B cell (primary cell): ENCODE measurements at regions of chr12 and their contacts with region 1.

Region 1: DNA sequence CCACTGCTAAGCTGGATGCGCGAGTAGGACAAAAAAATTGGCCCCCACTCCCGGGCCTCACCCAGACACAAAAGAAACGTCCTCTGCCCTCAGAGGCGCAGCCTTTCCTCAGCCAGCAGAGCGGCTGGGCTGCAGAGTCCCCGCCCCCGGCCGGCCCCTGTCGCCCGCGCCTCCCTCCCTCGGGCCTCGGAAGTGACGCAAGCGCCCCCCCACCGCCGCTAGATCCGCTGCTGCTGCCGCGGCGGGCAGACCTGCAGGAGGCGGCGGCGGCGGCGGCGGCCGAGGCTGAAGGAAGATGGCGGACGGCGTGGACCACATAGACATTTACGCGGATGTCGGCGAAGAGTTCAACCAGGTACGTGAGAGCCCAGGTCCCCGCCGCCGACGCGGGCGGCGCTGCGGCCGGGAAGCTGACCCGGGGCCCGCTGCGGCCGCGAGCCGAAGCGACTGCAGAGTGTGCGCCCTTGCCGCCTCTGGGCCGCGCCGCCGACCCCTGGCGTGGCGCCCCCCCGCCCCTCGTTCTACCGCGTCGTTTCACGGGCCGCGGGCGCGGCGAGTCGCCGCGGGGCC is at the start of gene CPSF6:
- DNase-seq: peak; percentile 97
- ATAC-seq: peak; percentile 94
- H3K4me3 ChIP-seq: peak within 1 kb of the TSS; percentile 63 to 91 (median 88)
- H3K4me3 Mint-ChIP-seq: peak within 1 kb of the TSS; percentile 93
- H3K27ac ChIP-seq: peak within 1 kb of the TSS; percentile 80 to 88
- H3K27ac Mint-ChIP-seq: peak within 1 kb of the TSS; percentile 98
- H3K4me1 ChIP-seq: peaks cover 33 to 39% of the 10 kb centered on the region in 2 donors
- H3K4me1 Mint-ChIP-seq: peaks cover 48% of the 10 kb centered on the region
- H3K27me3 ChIP-seq: no peaks in the 10 kb centered on the region
- H3K27me3 Mint-ChIP-seq: no peaks in the 10 kb centered on the region
- CTCF ChIP-seq: no peak
- total RNA-seq, gene CPSF6: 108 and 114 TPM in 2 replicates

Region 2: GRCh38 chr12:67268896-67269631 is 1970.4 kb before region 1 on chr12 and contains the start of gene CAND1:
- CTCF ChIA-PET with region 1: no interaction called
- POLR2A ChIA-PET with region 1: no interaction called
- intact Hi-C with region 1: loop called (anchors 2 kb)
- DNase-seq: peak; percentile 99
- ATAC-seq: peak; percentile 78
- H3K4me3 ChIP-seq: peak within 1 kb of the TSS; percentile 67 to 94 (median 80)
- H3K4me3 Mint-ChIP-seq: peak within 1 kb of the TSS; percentile 86
- H3K27ac ChIP-seq: peak within 1 kb of the TSS; percentile 90 to 94
- H3K27ac Mint-ChIP-seq: peak within 1 kb of the TSS; percentile 91
- H3K4me1 ChIP-seq: peaks cover 24 to 25% of the 10 kb centered on the region in 2 donors
- H3K4me1 Mint-ChIP-seq: peaks cover 34% of the 10 kb centered on the region
- H3K27me3 ChIP-seq: no peaks in the 10 kb centered on the region
- H3K27me3 Mint-ChIP-seq: no peaks in the 10 kb centered on the region
- CTCF ChIP-seq: no peak
- total RNA-seq, gene CAND1: 108 and 110 TPM in 2 replicates

Region 3: GRCh38 chr12:68745904-68746571 is 493.4 kb before region 1 on chr12 and contains the start of gene SLC35E3:
- CTCF ChIA-PET with region 1: no interaction called
- POLR2A ChIA-PET with region 1: no interaction called
- intact Hi-C with region 1: loop called (anchors 5 kb)
- DNase-seq: peak; percentile 93
- ATAC-seq: peak; percentile 97
- H3K4me3 ChIP-seq: peak within 1 kb of the TSS; percentile 75 to 96 (median 89)
- H3K4me3 Mint-ChIP-seq: peak within 1 kb of the TSS; percentile 97
- H3K27ac ChIP-seq: peak within 1 kb of the TSS; percentile 71 to 89
- H3K27ac Mint-ChIP-seq: peak within 1 kb of the TSS; percentile 95
- H3K4me1 ChIP-seq: peaks cover 21 to 26% of the 10 kb centered on the region in 2 donors
- H3K4me1 Mint-ChIP-seq: peaks cover 53% of the 10 kb centered on the region
- H3K27me3 ChIP-seq: no peaks in the 10 kb centered on the region
- H3K27me3 Mint-ChIP-seq: no peaks in the 10 kb centered on the region
- CTCF ChIP-seq: no peak
- total RNA-seq, gene SLC35E3: 15.1 TPM in 2 replicates

Region 4: DNA sequence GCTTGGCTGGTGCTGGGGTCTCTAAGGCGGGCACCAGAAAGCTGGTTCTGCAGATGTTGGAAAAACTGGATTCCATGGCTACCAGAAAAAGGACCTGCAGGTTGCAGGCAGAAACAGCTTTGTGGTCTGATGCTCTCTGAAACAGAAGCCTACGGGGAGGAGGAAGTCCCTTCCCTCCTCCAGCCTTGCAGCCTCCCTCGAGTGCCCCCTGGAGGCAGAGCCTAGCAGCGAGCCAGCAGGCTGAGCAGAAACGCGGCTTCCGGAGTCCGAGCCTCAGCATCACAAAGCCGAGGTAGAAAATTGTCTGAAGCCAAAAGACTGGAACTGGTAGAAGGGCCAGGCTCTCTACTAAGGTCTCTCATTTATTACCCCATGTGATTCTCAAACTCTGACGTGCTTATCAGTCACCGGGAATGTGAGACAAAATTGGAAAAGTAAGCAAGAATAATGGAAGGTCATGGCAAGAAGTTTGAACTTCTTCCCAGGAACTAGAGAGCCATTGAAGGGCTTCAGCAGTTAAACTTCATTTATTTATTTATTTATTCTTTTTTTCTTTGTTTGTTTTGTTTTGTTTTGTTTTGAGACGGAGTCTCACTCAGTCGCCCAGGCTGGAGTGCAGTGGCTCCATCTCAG is 82.3 kb before region 1 on chr12:
- CTCF ChIA-PET with region 1: interaction called, 10 read pairs
- POLR2A ChIA-PET with region 1: no interaction called
- intact Hi-C with region 1: loop called (anchors 1 kb)
- DNase-seq: peak; percentile 88
- ATAC-seq: peak; percentile 100
- H3K4me3 ChIP-seq: peak overlapping the region in 2 of 5 experiments; percentile 17 to 35
- H3K4me3 Mint-ChIP-seq: peak overlapping the region; percentile 69
- H3K27ac ChIP-seq: no peak overlapping the region
- H3K27ac Mint-ChIP-seq: peak overlapping the region; percentile 64
- H3K4me1 ChIP-seq: peaks cover 3 to 7% of the 10 kb centered on the region in 2 donors
- H3K4me1 Mint-ChIP-seq: peaks cover 12% of the 10 kb centered on the region
- H3K27me3 ChIP-seq: no peaks in the 10 kb centered on the region
- H3K27me3 Mint-ChIP-seq: no peaks in the 10 kb centered on the region
- CTCF ChIP-seq: peak; percentile 96

Region 5: GRCh38 chr12:69284131-69284530 is 44.7 kb after region 1 on chr12:
- CTCF ChIA-PET with region 1: interaction called, 3 read pairs
- POLR2A ChIA-PET with region 1: no interaction called
- intact Hi-C with region 1: loop called (anchors 5 kb)
- DNase-seq: peak; percentile 29
- ATAC-seq: no peak
- H3K4me3 ChIP-seq: peak overlapping the region in 3 of 5 experiments; percentile 1 to 40 (median 12)
- H3K4me3 Mint-ChIP-seq: peak overlapping the region; percentile 71
- H3K27ac ChIP-seq: no peak overlapping the region
- H3K27ac Mint-ChIP-seq: no peak overlapping the region
- H3K4me1 ChIP-seq: peaks cover 7 to 16% of the 10 kb centered on the region in 2 donors
- H3K4me1 Mint-ChIP-seq: peaks cover 17% of the 10 kb centered on the region
- H3K27me3 ChIP-seq: peaks cover 0 to 16% (median 11%) of the 10 kb centered on the region in 4 experiments
- H3K27me3 Mint-ChIP-seq: peaks cover 21% of the 10 kb centered on the region
- CTCF ChIP-seq: peak; percentile 14

Region 6: GRCh38 chr12:69470189-69471075 is 231.0 kb after region 1 on chr12 and contains the start of gene FRS2:
- CTCF ChIA-PET with region 1: no interaction called
- POLR2A ChIA-PET with region 1: no interaction called
- intact Hi-C with region 1: loop called (anchors 5 kb)
- DNase-seq: peak; percentile 84
- ATAC-seq: peak; percentile 94
- H3K4me3 ChIP-seq: peak within 1 kb of the TSS; percentile 48 to 99 (median 96)
- H3K4me3 Mint-ChIP-seq: peak within 1 kb of the TSS; percentile 98
- H3K27ac ChIP-seq: peak within 1 kb of the TSS; percentile 78 to 94
- H3K27ac Mint-ChIP-seq: peak within 1 kb of the TSS; percentile 97
- H3K4me1 ChIP-seq: peaks cover 44 to 56% of the 10 kb centered on the region in 2 donors
- H3K4me1 Mint-ChIP-seq: peaks cover 70% of the 10 kb centered on the region
- H3K27me3 ChIP-seq: no peaks in the 10 kb centered on the region
- H3K27me3 Mint-ChIP-seq: no peaks in the 10 kb centered on the region
- CTCF ChIP-seq: no peak
- total RNA-seq, gene FRS2: 29.5 and 33.7 TPM in 2 replicates

Region 7: GRCh38 chr12:69738351-69739286 is 499.2 kb after region 1 on chr12 and contains the start of gene RAB3IP:
- CTCF ChIA-PET with region 1: no interaction called
- POLR2A ChIA-PET with region 1: no interaction called
- intact Hi-C with region 1: loop called (anchors 1 kb)
- DNase-seq: peak; percentile 94
- ATAC-seq: peak; percentile 93
- H3K4me3 ChIP-seq: peak within 1 kb of the TSS; percentile 63 to 77 (median 70)
- H3K4me3 Mint-ChIP-seq: peak within 1 kb of the TSS; percentile 87
- H3K27ac ChIP-seq: peak within 1 kb of the TSS; percentile 57 to 91
- H3K27ac Mint-ChIP-seq: peak within 1 kb of the TSS; percentile 76
- H3K4me1 ChIP-seq: peaks cover 11 to 15% of the 10 kb centered on the region in 2 donors
- H3K4me1 Mint-ChIP-seq: peaks cover 11% of the 10 kb centered on the region
- H3K27me3 ChIP-seq: peaks cover 0 to 6% (median 0%) of the 10 kb centered on the region in 4 experiments
- H3K27me3 Mint-ChIP-seq: peaks cover 12% of the 10 kb centered on the region
- CTCF ChIP-seq: peak; percentile 79
- total RNA-seq, gene RAB3IP: 37.9 and 38.4 TPM in 2 replicates